Activated CD8-positive, alpha-beta T cell treated with anti-CD3 and anti-CD28 coated beads, Interleukin-2, amount 10 ng/mL, durations not matched to agents 7 days and 5 days (primary cell): ENCODE measurements at regions of chr7 and their contacts with region 1.

Region 1: DNA sequence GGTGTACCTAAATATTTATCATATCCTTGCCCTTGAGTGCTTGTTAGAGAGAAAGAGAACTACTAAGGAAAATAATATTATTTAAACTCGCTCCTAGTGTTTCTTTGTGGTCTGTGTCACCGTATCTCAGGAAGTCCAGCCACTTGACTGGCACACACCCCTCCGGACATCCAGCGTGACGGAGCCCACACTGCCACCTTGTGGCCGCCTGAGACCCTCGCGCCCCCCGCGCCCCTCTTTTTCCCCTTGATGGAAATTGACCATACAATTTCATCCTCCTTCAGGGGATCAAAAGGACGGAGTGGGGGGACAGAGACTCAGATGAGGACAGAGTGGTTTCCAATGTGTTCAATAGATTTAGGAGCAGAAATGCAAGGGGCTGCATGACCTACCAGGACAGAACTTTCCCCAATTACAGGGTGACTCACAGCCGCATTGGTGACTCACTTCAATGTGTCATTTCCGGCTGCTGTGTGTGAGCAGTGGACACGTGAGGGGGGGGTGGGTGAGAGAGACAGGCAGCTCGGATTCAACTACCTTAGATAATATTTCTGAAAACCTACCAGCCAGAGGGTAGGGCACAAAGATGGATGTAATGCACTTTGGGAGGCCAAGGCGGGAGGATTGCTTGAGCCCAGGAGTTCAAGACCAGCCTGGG is 11.4 kb downstream of the SERPINE1 start:
- DNase-seq: peak; percentile 91
- ATAC-seq: peak; percentile 90
- H3K4me3 Mint-ChIP-seq: peak overlapping the region; percentile 54
- H3K27ac Mint-ChIP-seq: peak overlapping the region; percentile 82
- H3K4me1 Mint-ChIP-seq: peaks cover 47% of the 10 kb centered on the region
- H3K27me3 Mint-ChIP-seq: peaks cover 16% of the 10 kb centered on the region

Region 2: GRCh38 chr7:101126651-101127280 is 11.6 kb before region 1 on chr7 and contains the start of gene SERPINE1:
- CTCF ChIA-PET with region 1: interaction called, 51 read pairs
- POLR2A ChIA-PET with region 1: interaction called, 3 read pairs
- DNase-seq: peak; percentile 88
- ATAC-seq: peak; percentile 81
- H3K4me3 Mint-ChIP-seq: peak within 1 kb of the TSS; percentile 56
- H3K27ac Mint-ChIP-seq: peak within 1 kb of the TSS; percentile 79
- H3K4me1 Mint-ChIP-seq: peaks cover 60% of the 10 kb centered on the region
- H3K27me3 Mint-ChIP-seq: peaks cover 22% of the 10 kb centered on the region
- total RNA-seq, gene SERPINE1: 0.47 to 0.58 TPM

Region 3: DNA sequence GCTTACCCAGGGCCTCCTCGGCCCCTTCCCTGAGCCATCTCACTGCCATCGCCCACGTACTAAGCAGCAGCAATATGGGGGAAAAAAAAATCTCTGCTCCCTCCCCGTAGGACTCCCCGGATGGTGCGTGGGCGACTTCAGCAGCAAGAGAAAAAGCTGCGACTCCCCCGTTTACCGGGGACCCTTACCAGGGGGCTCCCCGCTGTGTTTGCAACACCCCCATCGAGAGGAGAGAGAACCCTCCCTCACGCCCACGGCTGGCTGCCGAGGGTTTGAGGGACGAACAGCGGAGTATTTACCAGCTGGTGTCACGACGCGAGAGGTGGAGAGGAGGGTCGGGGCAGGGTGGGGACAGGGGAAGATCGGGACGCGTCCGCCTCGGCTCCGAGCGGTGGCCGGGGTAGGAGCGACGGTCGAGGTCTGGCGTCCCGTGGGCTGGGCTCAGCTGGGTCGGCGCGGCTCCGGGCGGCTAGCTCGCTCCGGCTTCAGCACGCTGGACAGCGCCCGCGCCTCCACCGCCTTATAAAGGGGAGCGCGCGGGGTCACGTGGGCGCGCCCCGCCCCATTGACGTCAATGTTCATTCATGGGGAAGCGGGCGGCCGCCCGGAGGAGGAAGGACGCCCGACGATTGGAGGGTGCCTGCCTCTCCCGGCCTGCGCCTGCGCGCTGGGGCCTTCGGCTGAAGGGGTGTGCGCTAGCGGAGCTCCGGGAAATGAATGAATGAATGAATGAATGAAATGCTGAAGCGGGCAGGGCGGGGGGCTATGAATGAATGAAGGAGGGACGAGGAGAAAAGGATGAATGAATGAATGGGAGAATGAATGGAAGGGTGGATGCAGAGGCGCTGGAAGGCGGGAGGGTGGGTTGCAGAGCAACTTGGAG is 27.0 kb after region 1 on chr7 and contains the start of gene VGF:
- CTCF ChIA-PET with region 1: interaction called, 59 read pairs
- POLR2A ChIA-PET with region 1: no interaction called
- DNase-seq: peak; percentile 95
- ATAC-seq: peak; percentile 82
- H3K4me3 Mint-ChIP-seq: peak within 1 kb of the TSS; percentile 68
- H3K27ac Mint-ChIP-seq: peak within 1 kb of the TSS; percentile 19
- H3K4me1 Mint-ChIP-seq: peaks cover 47% of the 10 kb centered on the region
- H3K27me3 Mint-ChIP-seq: peaks cover 52% of the 10 kb centered on the region
- total RNA-seq, gene VGF: 0.29 to 0.53 TPM

Region 4: GRCh38 chr7:101195884-101196283 is 57.5 kb after region 1 on chr7:
- CTCF ChIA-PET with region 1: interaction called, 232 read pairs
- POLR2A ChIA-PET with region 1: no interaction called
- DNase-seq: no peak
- ATAC-seq: no peak
- H3K4me3 Mint-ChIP-seq: no peak overlapping the region
- H3K27ac Mint-ChIP-seq: no peak overlapping the region
- H3K4me1 Mint-ChIP-seq: peaks cover 9% of the 10 kb centered on the region
- H3K27me3 Mint-ChIP-seq: peaks cover 14% of the 10 kb centered on the region

Region 5: GRCh38 chr7:101244375-101245146 is 106.2 kb after region 1 on chr7 and contains the start of gene FIS1:
- CTCF ChIA-PET with region 1: interaction called, 29 read pairs
- POLR2A ChIA-PET with region 1: no interaction called
- DNase-seq: peak; percentile 95
- ATAC-seq: peak; percentile 96
- H3K4me3 Mint-ChIP-seq: peak within 1 kb of the TSS; percentile 93
- H3K27ac Mint-ChIP-seq: peak within 1 kb of the TSS; percentile 97
- H3K4me1 Mint-ChIP-seq: peaks cover 33% of the 10 kb centered on the region
- H3K27me3 Mint-ChIP-seq: no peaks in the 10 kb centered on the region
- total RNA-seq, gene FIS1: 103 to 108 TPM

Region 6: GRCh38 chr7:101347477-101347876 is 209.1 kb after region 1 on chr7:
- CTCF ChIA-PET with region 1: no interaction called
- POLR2A ChIA-PET with region 1: no interaction called
- DNase-seq: no peak
- ATAC-seq: no peak
- H3K4me3 Mint-ChIP-seq: no peak overlapping the region
- H3K27ac Mint-ChIP-seq: no peak overlapping the region
- H3K4me1 Mint-ChIP-seq: peaks cover 10% of the 10 kb centered on the region
- H3K27me3 Mint-ChIP-seq: peaks cover 7% of the 10 kb centered on the region